CD4-positive, alpha-beta T cell (primary cell): ENCODE measurements at regions of chr4 and their contacts with region 1.

Region 1: DNA sequence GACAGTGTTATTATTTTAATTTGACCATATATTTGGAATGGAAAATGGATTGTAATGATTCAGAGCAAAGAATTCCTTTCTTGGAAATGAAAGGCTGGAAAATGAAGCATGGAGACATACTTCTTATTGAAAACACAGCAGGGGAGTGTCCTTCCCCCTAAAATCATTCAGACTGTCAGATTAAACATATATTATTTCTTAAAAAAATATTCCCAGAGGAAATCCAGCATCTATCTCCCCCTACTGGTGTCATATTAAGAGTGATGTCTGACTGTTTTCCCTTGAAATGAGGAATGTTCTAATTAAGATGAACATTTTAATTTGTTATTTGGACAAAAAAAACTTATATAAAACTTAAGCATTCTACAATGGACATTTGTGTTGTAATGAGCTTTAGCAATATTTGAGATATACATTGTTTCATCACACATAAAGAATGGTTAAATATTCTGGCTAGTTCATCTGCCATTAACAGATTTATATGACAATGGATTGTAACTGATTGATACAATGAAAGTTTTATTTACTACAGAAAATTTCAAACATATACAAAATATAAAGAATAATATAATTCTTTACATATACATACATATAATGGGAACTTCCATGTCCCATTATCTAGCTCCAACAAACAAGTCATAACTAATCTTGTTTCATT is 264.6 kb downstream of the SPRY1 start:
- DNase-seq: peak in 3 of 14 experiments; percentile 23
- ATAC-seq: no peak
- H3K4me3 ChIP-seq: no peak overlapping the region
- H3K4me3 Mint-ChIP-seq: no peak overlapping the region
- H3K27ac ChIP-seq: no peak overlapping the region
- H3K27ac Mint-ChIP-seq: no peak overlapping the region
- H3K4me1 ChIP-seq: no peaks in the 10 kb centered on the region
- H3K4me1 Mint-ChIP-seq: no peaks in the 10 kb centered on the region
- H3K27me3 ChIP-seq: no peaks in the 10 kb centered on the region
- H3K27me3 Mint-ChIP-seq: no peaks in the 10 kb centered on the region
- CTCF ChIP-seq: peak; percentile 47

Region 2: GRCh38 chr4:122689972-122690371 is 971.2 kb before region 1 on chr4:
- CTCF ChIA-PET with region 1: no interaction called
- POLR2A ChIA-PET with region 1: no interaction called
- intact Hi-C with region 1: no loop called
- DNase-seq: no peak
- ATAC-seq: no peak
- H3K4me3 ChIP-seq: no peak overlapping the region
- H3K4me3 Mint-ChIP-seq: no peak overlapping the region
- H3K27ac ChIP-seq: no peak overlapping the region
- H3K27ac Mint-ChIP-seq: no peak overlapping the region
- H3K4me1 ChIP-seq: no peaks in the 10 kb centered on the region
- H3K4me1 Mint-ChIP-seq: no peaks in the 10 kb centered on the region
- H3K27me3 ChIP-seq: no peaks in the 10 kb centered on the region
- H3K27me3 Mint-ChIP-seq: no peaks in the 10 kb centered on the region
- CTCF ChIP-seq: no peak

Region 3: GRCh38 chr4:123102897-123103471 is 558.2 kb before region 1 on chr4:
- CTCF ChIA-PET with region 1: no interaction called
- POLR2A ChIA-PET with region 1: no interaction called
- intact Hi-C with region 1: loop called (anchors 2 to 5 kb)
- DNase-seq: peak in 3 of 14 experiments; percentile 24 to 26 (median 25)
- ATAC-seq: peak; percentile 37
- H3K4me3 ChIP-seq: no peak overlapping the region
- H3K4me3 Mint-ChIP-seq: no peak overlapping the region
- H3K27ac ChIP-seq: no peak overlapping the region
- H3K27ac Mint-ChIP-seq: no peak overlapping the region
- H3K4me1 ChIP-seq: no peaks in the 10 kb centered on the region
- H3K4me1 Mint-ChIP-seq: no peaks in the 10 kb centered on the region
- H3K27me3 ChIP-seq: no peaks in the 10 kb centered on the region
- H3K27me3 Mint-ChIP-seq: no peaks in the 10 kb centered on the region
- CTCF ChIP-seq: peak; percentile 64

Region 4: GRCh38 chr4:123390846-123391456 is 270.3 kb before region 1 on chr4:
- CTCF ChIA-PET with region 1: no interaction called
- POLR2A ChIA-PET with region 1: no interaction called
- intact Hi-C with region 1: loop called (anchors 2 to 5 kb)
- DNase-seq: peak in 3 of 14 experiments; percentile 36 to 49 (median 40)
- ATAC-seq: no peak
- H3K4me3 ChIP-seq: no peak overlapping the region
- H3K4me3 Mint-ChIP-seq: no peak overlapping the region
- H3K27ac ChIP-seq: no peak overlapping the region
- H3K27ac Mint-ChIP-seq: no peak overlapping the region
- H3K4me1 ChIP-seq: no peaks in the 10 kb centered on the region
- H3K4me1 Mint-ChIP-seq: no peaks in the 10 kb centered on the region
- H3K27me3 ChIP-seq: no peaks in the 10 kb centered on the region
- H3K27me3 Mint-ChIP-seq: no peaks in the 10 kb centered on the region
- CTCF ChIP-seq: peak; percentile 73

Region 5: GRCh38 chr4:123396307-123397143 is 264.7 kb before region 1 on chr4 and contains the start of gene SPRY1:
- CTCF ChIA-PET with region 1: no interaction called
- POLR2A ChIA-PET with region 1: no interaction called
- intact Hi-C with region 1: loop called (anchors 2 to 5 kb)
- DNase-seq: peak in 13 of 14 experiments; percentile 38 to 87 (median 62)
- ATAC-seq: peak; percentile 67
- H3K4me3 ChIP-seq: peak within 1 kb of the TSS; percentile 75
- H3K4me3 Mint-ChIP-seq: peak within 1 kb of the TSS; percentile 90
- H3K27ac ChIP-seq: no peak within 1 kb of the TSS
- H3K27ac Mint-ChIP-seq: peak within 1 kb of the TSS; percentile 70
- H3K4me1 ChIP-seq: peaks cover 33% of the 10 kb centered on the region
- H3K4me1 Mint-ChIP-seq: peaks cover 30% of the 10 kb centered on the region
- H3K27me3 ChIP-seq: peaks cover 4 to 11% of the 10 kb centered on the region in 2 experiments
- H3K27me3 Mint-ChIP-seq: peaks cover 25% of the 10 kb centered on the region
- CTCF ChIP-seq: no peak
- total RNA-seq, gene SPRY1: 19.6 to 20.3 TPM

Region 6: GRCh38 chr4:123564758-123565346 is 96.4 kb before region 1 on chr4:
- CTCF ChIA-PET with region 1: no interaction called
- POLR2A ChIA-PET with region 1: no interaction called
- intact Hi-C with region 1: loop called (anchors 2 to 10 kb)
- DNase-seq: peak in 12 of 14 experiments; percentile 8 to 79 (median 22)
- ATAC-seq: peak; percentile 86
- H3K4me3 ChIP-seq: no peak overlapping the region
- H3K4me3 Mint-ChIP-seq: no peak overlapping the region
- H3K27ac ChIP-seq: no peak overlapping the region
- H3K27ac Mint-ChIP-seq: no peak overlapping the region
- H3K4me1 ChIP-seq: no peaks in the 10 kb centered on the region
- H3K4me1 Mint-ChIP-seq: no peaks in the 10 kb centered on the region
- H3K27me3 ChIP-seq: no peaks in the 10 kb centered on the region
- H3K27me3 Mint-ChIP-seq: peaks cover 4% of the 10 kb centered on the region
- CTCF ChIP-seq: peak; percentile 88